ENCODE measurements at regions of chr10 and their contacts with region 1.

Region 1: DNA sequence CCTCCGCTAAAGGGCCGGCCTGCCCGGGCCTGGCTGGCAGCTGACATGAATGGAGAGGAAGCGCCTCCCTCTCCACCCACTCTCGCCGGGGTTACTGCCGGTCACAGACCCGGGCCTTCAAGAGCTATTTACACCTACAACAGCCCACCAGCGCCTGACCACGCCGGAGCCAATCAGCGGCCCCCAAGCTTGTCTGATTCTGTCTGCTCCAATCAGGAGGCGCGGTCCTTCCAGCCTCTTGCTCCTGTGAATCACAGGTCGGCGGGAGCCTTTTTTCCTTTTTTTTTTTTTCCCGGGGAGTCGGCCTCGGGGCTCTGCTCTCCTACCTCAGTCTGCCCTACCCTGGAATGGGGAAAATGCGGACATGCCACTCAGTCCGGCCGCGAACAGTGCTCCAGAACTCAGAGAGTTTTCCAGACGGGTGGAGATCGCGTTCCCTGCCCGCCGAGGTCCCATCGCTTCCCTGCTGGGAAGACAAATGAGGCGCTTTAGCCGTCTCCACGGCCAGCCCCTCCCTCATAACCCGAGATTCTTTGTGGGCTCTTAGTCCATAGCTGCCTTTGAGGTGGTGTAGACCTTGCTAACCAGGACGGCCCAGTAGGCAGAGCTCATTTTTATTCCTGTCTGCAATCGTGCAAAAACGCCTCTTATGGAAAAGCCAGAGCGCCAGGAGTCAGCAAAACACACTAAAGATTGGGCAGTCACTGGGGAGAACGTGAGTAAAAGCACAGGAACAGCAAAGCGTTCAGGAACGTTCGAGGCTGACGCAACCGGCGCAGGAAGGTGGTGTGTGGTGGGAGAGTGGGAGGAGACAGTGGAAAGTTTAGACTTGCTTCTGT is 26.5 kb downstream of the SCD start:
- DNase-seq: peak; percentile 84 to 89
- ATAC-seq: peak; percentile 65 to 91 (median 84)
- H3K4me3 ChIP-seq: peak overlapping the region; percentile 65
- H3K4me3 Mint-ChIP-seq: no peak overlapping the region
- H3K27ac ChIP-seq: peak overlapping the region; percentile 90
- H3K27ac Mint-ChIP-seq: no peak overlapping the region
- H3K4me1 ChIP-seq: peaks cover 61% of the 10 kb centered on the region
- H3K4me1 Mint-ChIP-seq: peaks cover 31 to 42% of the 10 kb centered on the region in 2 donors
- H3K27me3 ChIP-seq: no peaks in the 10 kb centered on the region
- H3K27me3 Mint-ChIP-seq: peaks cover 0 to 7% of the 10 kb centered on the region in 2 donors
- CTCF ChIP-seq: no peak

Region 2: DNA sequence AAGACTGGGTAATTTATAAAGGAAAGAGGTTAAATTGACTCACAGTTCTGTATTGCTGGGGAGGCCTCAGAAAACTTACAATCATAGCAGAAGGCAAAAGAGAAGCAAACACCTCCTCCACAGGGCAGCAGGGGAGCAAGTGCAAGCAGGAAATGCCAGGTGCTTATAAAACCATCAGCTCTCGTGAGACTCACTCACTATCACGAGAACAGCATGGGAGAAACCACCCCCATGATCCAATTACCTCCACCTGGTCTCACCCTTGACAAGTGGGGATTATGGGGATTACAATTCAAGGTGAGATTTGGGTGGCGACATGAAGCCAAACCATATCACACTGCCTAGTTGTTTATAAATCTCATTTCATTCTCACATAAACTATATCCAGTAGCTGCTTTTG is 263.8 kb before region 1 on chr10:
- intact Hi-C with region 1: no loop called
- DNase-seq: no peak
- ATAC-seq: no peak
- H3K4me3 ChIP-seq: no peak overlapping the region
- H3K4me3 Mint-ChIP-seq: no peak overlapping the region
- H3K27ac ChIP-seq: no peak overlapping the region
- H3K27ac Mint-ChIP-seq: no peak overlapping the region
- H3K4me1 ChIP-seq: no peaks in the 10 kb centered on the region
- H3K4me1 Mint-ChIP-seq: no peaks in the 10 kb centered on the region
- H3K27me3 ChIP-seq: peaks cover 3% of the 10 kb centered on the region
- H3K27me3 Mint-ChIP-seq: peaks cover 19 to 41% of the 10 kb centered on the region in 2 donors
- CTCF ChIP-seq: no peak

Region 3: GRCh38 chr10:100346765-100347567 is 26.6 kb before region 1 on chr10 and contains the start of gene SCD:
- intact Hi-C with region 1: loop called (anchors 1 kb)
- DNase-seq: peak; percentile 76 to 89
- ATAC-seq: peak; percentile 90 to 91 (median 90)
- H3K4me3 ChIP-seq: peak within 1 kb of the TSS; percentile 58
- H3K4me3 Mint-ChIP-seq: peak within 1 kb of the TSS; percentile 82
- H3K27ac ChIP-seq: peak within 1 kb of the TSS; percentile 23
- H3K27ac Mint-ChIP-seq: peak within 1 kb of the TSS; percentile 48 to 68
- H3K4me1 ChIP-seq: peaks cover 21% of the 10 kb centered on the region
- H3K4me1 Mint-ChIP-seq: peaks cover 25 to 45% of the 10 kb centered on the region in 2 donors
- H3K27me3 ChIP-seq: no peaks in the 10 kb centered on the region
- H3K27me3 Mint-ChIP-seq: no peaks in the 10 kb centered on the region
- CTCF ChIP-seq: no peak
- total RNA-seq, gene SCD: 3.5 to 10.1 (median 3.8) TPM

Region 4: DNA sequence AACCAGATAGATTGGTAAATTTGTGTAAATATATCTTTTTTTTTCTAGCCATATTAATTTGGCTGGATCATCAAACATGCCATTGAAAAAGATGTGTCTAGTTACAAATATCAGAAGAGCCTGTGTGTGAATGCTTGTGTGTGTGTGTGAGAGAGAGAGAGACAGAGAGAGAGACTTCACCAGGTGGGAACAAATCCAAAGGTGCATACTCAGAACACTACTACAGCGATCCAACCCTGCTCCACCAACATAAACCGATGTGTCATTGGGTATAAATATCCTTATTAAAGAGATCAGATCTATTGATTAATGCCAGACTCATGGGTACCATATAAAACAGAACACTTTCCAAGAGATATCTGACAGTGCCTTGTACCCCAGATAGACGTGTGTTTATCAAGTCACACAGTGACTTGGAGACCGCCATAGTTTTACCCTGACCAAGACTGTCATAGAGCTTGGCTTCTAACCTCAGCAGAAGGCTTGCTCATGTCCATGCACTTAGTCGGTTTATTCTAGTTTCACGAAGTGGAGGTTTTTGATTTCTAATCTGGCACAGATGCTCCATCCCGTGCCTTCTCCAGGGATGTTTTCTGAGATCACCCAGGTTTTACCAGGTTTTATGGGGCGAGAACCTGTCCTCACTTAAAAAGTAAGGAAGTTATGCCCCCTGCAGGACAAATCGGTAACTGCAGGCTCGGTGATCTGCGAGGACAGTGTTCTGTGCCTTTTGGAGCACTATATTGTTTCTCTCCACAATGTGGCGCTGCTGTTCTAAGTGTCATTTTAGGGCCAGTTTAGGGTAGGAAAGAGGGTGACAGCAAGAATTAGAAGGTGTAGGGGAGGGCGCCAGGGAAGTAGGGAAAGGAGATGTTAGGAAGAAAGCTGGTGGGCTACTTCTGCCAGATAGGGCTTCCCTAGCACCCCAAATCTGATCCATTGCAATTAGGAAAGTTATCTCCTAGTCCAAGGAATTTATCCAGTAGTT is 60.0 kb after region 1 on chr10:
- intact Hi-C with region 1: loop called (anchors 2 kb)
- DNase-seq: peak; percentile 93 to 97
- ATAC-seq: peak; percentile 99 to 100 (median 100)
- H3K4me3 ChIP-seq: no peak overlapping the region
- H3K4me3 Mint-ChIP-seq: no peak overlapping the region
- H3K27ac ChIP-seq: no peak overlapping the region
- H3K27ac Mint-ChIP-seq: no peak overlapping the region
- H3K4me1 ChIP-seq: no peaks in the 10 kb centered on the region
- H3K4me1 Mint-ChIP-seq: no peaks in the 10 kb centered on the region
- H3K27me3 ChIP-seq: no peaks in the 10 kb centered on the region
- H3K27me3 Mint-ChIP-seq: no peaks in the 10 kb centered on the region
- CTCF ChIP-seq: peak; percentile 100

Region 5: DNA sequence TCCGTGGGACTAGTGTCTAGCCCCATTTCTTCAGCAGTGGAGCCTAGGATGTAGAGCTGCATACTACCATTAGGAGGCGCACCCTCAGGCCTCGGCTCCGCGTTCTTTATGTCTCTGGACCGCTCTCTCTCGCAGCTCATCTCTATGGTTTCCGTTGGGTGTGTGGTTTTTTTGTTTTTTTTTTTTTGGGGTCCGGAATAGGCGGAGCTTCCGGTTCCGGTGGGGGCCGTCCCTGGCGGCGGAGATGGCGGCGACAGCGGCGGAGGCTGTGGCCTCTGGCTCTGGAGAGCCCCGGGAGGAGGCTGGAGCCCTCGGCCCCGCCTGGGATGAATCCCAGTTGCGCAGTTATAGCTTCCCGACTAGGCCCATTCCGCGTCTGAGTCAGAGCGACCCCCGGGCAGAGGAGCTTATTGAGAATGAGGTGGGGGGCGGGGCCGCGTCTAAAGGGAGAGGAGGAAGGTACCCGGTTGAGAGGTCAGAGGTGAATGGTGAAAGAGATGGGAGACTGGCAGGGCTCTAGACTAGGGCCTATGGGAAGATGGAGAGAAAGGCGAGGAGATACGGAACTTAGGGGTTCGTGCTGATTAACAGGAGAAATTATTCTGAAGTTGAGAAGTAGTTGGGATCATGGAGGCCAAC is 162.3 kb after region 1 on chr10 and contains the start of gene HIF1AN:
- intact Hi-C with region 1: loop called (anchors 5 kb)
- DNase-seq: peak; percentile 82 to 97
- ATAC-seq: peak; percentile 96 to 100 (median 98)
- H3K4me3 ChIP-seq: peak within 1 kb of the TSS; percentile 76
- H3K4me3 Mint-ChIP-seq: peak within 1 kb of the TSS; percentile 40
- H3K27ac ChIP-seq: peak within 1 kb of the TSS; percentile 68
- H3K27ac Mint-ChIP-seq: no peak within 1 kb of the TSS
- H3K4me1 ChIP-seq: peaks cover 17% of the 10 kb centered on the region
- H3K4me1 Mint-ChIP-seq: peaks cover 5 to 18% of the 10 kb centered on the region in 2 donors
- H3K27me3 ChIP-seq: no peaks in the 10 kb centered on the region
- H3K27me3 Mint-ChIP-seq: no peaks in the 10 kb centered on the region
- CTCF ChIP-seq: peak; percentile 84
- total RNA-seq, gene HIF1AN: 52.0 to 66.4 (median 58.7) TPM

Measured in natural killer cell (primary cell).